ENCODE measurements at regions of chr17 and their contacts with region 1.

Region 1: GRCh38 chr17:10754861-10755627 is 25.2 kb upstream of the TMEM220 start:
- DNase-seq: no peak
- H3K4me3 ChIP-seq: no peak overlapping the region
- CTCF ChIP-seq: no peak
- POLR2A ChIP-seq: no peak

Region 2: GRCh38 chr17:10836966-10837590 is 82.0 kb after region 1 on chr17:
- intact Hi-C with region 1: loop called (anchors 5 kb)
- DNase-seq: no peak
- H3K4me3 ChIP-seq: no peak overlapping the region
- CTCF ChIP-seq: no peak
- POLR2A ChIP-seq: no peak

Measured in lower leg skin (tissue), 4 donors.